Mammary epithelial cell (primary cell): ENCODE measurements at regions of chr2 and their contacts with region 1.

Region 1: DNA sequence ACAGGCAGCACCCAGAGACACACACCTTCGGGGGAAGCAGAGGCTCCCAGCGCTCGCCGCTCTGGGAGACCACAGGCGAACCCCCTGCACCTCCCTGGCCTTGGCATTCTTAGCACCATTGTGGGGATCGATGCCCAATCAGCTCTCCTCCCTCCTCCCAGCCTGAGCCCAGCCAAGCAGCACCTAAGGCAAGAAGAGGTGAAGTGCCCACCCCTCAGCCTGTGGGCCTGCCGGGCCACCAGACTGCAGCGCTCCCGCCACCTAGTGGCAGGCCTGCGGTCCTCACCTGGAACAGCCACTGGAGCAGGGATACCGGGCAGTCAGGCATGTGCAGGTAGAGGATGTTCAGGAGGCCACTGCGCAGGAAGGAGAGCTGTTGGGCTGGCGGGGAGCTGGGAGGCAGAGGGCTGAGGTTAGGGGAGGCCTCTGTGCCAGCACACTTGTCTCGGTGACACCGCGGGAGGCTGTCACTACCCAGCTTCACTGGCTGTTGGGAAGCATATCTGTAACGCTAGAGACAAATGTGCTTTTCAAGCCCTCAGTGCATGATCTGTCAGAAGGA is 35.2 kb downstream of the FAM178B start:
- DNase-seq: peak; percentile 52
- H3K4me3 ChIP-seq: peak overlapping the region in 1 of 3 experiments; percentile 23
- H3K27ac ChIP-seq: no peak overlapping the region
- H3K4me1 ChIP-seq: peaks cover 6% of the 10 kb centered on the region
- H3K27me3 ChIP-seq: no peaks in the 10 kb centered on the region
- CTCF ChIP-seq: peak; percentile 77 to 96

Region 2: GRCh38 chr2:96869822-96870625 is 81.2 kb before region 1 on chr2 and contains the start of gene SEMA4C:
- CTCF ChIA-PET with region 1: no interaction called
- dilution Hi-C with region 1: loop called (anchors 5 kb)
- in situ Hi-C with region 1: no loop called
- intact Hi-C with region 1: no loop called
- DNase-seq: no peak
- H3K4me3 ChIP-seq: peak within 1 kb of the TSS; percentile 77 to 88 (median 85)
- H3K27ac ChIP-seq: peak within 1 kb of the TSS; percentile 32
- H3K4me1 ChIP-seq: peaks cover 10% of the 10 kb centered on the region
- H3K27me3 ChIP-seq: no peaks in the 10 kb centered on the region
- CTCF ChIP-seq: no peak
- total RNA-seq, gene SEMA4C: 13.2 to 14.0 TPM

Region 3: DNA sequence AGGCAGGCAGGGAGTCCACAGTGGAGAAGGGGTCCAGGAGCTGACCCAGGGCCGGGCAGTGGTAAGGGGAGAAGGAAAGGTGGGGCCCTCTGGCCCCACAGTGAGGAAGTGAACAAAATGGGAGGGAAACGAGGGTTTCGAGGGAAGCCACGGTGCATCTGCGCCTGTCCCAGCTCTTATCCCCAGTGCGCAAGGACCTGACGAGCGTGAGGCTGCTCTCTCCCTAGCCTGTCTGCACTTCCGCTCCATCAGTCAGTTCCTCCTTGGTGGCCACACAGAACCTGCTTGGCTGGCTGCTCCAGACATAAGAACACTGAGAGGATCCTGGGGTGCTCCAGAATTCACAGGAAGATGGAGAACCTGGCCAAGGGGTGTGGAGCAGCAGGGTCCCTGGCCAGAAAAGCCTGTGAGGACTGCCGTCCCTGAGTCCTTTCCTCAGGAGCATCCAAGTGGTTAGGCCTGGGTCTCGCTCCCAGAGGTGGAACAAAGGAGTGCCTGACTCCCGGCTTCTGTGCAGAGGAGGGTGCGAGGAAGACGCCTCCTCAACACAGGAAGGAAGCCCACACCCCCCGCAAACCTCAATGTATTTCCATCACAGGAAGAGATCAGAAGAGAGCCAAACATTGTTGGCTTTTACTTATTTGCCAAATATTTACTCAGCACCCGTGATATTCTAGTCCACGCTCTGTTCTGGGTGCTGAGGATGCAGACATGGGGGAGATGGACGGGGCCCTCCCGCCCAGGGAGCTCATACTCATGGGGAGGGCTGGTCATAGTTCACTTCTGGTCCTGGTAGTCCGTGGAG is 37.6 kb before region 1 on chr2:
- CTCF ChIA-PET with region 1: no interaction called
- dilution Hi-C with region 1: loop called (anchors 5 kb)
- in situ Hi-C with region 1: no loop called
- intact Hi-C with region 1: no loop called
- DNase-seq: no peak
- H3K4me3 ChIP-seq: no peak overlapping the region
- H3K27ac ChIP-seq: no peak overlapping the region
- H3K4me1 ChIP-seq: peaks cover 7% of the 10 kb centered on the region
- H3K27me3 ChIP-seq: no peaks in the 10 kb centered on the region
- CTCF ChIP-seq: no peak

Region 4: DNA sequence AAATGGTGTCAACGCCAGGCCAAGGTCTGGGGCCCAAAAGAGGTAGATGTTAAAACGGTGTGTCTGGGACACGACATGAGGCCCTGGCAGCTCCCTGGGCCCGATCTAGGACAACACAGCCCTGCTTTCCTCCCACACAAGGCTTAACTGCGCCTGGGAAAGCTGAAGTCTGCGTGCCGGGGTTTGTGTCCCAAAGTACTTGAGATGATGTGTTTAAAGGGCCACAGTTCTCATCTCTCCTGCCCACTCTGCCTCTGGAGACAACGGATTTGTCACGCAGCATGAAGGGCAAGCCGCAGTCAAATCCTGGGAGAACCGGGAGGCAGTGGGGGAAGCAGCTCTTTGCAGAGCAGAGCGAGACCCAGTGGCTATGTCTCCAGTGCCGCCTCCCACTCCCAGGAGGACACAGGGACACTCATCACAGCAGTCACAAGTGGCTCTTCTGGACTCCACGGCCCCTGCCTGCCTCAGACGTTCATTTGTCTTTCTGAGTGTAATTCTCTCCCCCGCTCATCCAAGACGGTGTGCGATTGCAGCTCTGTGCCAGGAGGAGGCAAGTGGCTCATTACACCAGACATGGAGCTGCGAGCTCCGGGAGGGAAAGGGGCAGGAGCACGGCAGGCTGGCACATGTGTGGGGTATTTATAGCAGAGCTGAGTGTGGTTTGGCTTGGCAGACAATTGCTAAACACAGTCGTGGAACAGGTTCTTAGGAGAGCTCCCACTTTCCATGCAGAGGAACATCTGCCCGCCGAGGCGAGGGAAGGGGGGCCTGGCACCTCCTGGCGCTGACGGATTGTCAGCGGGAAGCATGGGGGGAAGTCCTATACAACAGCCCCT is 23.6 kb before region 1 on chr2:
- CTCF ChIA-PET with region 1: no interaction called
- dilution Hi-C with region 1: no loop called
- in situ Hi-C with region 1: no loop called
- intact Hi-C with region 1: loop called (anchors 1 kb)
- DNase-seq: peak; percentile 92
- H3K4me3 ChIP-seq: peak overlapping the region in 1 of 3 experiments; percentile 22
- H3K27ac ChIP-seq: no peak overlapping the region
- H3K4me1 ChIP-seq: peaks cover 21% of the 10 kb centered on the region
- H3K27me3 ChIP-seq: no peaks in the 10 kb centered on the region
- CTCF ChIP-seq: peak; percentile 40 to 69

Region 5: DNA sequence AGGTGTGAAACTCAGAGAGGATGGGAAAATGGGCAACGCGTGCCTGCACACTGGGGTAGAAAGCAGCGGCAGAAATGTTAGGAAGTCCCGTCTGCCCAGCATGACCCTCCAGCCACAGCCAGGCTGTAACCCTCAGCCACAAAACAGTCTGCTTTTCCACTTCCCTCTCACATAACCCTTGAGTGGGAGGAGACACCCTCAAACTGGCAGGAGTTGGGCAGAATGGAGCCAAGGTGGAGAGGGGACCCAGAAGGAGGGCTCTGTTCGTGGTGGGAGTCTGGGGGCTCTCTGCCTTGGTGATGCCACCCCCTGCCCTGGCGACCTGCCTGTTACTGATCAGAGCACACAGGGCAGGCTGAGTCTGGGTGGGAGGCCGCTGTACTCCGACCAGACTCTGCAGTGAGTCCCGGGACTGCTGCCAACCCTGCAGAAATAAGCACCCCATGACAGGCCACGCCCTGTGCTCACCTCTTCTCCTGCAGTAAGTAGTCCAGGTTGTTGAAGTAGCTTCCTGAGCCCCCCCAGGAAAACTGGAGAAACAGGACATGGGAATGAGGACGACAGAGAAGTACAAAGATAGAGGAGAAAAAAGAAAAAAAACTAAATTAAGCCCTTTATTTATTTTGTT is 19.2 kb after region 1 on chr2:
- CTCF ChIA-PET with region 1: no interaction called
- dilution Hi-C with region 1: no loop called
- in situ Hi-C with region 1: no loop called
- intact Hi-C with region 1: no loop called
- DNase-seq: no peak
- H3K4me3 ChIP-seq: no peak overlapping the region
- H3K27ac ChIP-seq: no peak overlapping the region
- H3K4me1 ChIP-seq: peaks cover 4% of the 10 kb centered on the region
- H3K27me3 ChIP-seq: no peaks in the 10 kb centered on the region
- CTCF ChIP-seq: no peak